ENCODE measurements at regions of chr22 and their contacts with region 1.

Region 1: DNA sequence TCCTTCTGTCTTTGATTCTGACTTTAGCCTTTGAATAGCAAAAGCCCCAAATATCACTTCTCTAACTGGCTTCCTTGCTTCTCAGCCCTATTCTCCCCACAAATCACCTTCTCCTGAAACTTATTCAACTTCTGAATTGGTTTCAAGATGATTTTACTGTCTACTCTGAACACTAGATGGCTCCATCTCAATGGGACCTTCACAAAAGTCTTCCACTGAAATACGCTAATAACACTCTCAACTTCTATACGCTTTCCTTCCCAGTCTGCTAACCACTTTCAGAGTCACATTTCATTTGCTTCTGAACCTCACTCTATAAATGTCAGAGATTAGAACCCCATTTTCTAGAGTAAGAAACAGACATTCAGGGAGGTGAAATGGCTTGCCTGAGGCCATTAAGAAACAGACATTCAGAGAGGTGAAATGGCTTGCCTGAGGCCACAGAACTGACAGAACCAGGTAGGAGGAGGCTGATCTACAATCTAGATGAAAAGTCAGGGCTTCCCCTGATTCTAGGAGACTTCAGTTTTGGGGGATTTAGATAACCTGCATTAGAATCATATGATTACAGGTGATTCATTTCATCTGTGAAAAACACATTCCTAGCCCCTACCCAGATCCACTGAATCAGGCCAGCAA is 20.6 kb downstream of the MORC2 start:
- DNase-seq: no peak

Region 2: GRCh38 chr22:31089160-31090100 is 141.5 kb after region 1 on chr22:
- intact Hi-C with region 1: loop called (anchors 1 kb)
- DNase-seq: no peak

Region 3: GRCh38 chr22:31230871-31231621 is 283.1 kb after region 1 on chr22:
- intact Hi-C with region 1: loop called (anchors 10 kb)
- DNase-seq: no peak

Region 4: GRCh38 chr22:31439808-31440207 is 491.9 kb after region 1 on chr22:
- intact Hi-C with region 1: no loop called
- DNase-seq: peak; percentile 80

Measured in cardiac septum (tissue), 1 donor.